ENCODE measurements at regions of chr2 and their contacts with region 1.

Region 1: DNA sequence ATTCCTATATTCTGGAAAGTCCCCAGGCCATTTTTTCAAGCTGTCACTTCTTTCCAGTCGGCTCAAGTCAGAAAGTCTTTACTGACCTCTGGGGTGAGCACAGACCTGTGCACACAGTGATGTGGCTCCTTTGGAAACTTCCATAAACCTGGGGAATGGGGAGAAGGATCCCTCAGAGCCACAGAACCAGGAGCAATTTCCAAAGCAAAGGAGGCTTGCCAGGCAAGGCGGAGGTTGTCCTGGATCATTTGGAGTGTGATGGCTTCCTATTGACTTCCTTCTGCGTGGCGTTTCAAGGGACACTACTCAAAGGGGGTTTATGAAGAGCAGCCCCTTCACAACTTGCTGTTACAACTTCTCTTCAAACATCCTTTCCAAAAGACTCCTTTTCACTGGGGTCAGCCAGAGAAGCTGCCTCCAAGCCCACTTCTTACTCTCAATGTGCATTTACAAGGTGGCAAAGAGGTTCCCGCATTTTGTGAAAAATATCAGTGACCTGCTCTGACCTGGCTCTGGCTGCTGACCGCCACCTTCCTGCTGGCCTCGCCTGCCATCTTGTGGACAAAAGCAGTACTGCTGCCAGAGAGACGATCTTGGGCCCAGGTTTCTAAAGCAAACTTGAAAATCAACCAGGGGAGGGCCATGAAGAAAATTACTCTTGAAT is 18.2 kb upstream of the TMEM247 start:
- DNase-seq: peak; percentile 81
- ATAC-seq: peak; percentile 81
- H3K4me3 Mint-ChIP-seq: no peak overlapping the region
- H3K27ac Mint-ChIP-seq: no peak overlapping the region
- H3K4me1 Mint-ChIP-seq: peaks cover 8% of the 10 kb centered on the region
- H3K27me3 Mint-ChIP-seq: no peaks in the 10 kb centered on the region
- CTCF ChIP-seq: peak; percentile 98

Region 2: DNA sequence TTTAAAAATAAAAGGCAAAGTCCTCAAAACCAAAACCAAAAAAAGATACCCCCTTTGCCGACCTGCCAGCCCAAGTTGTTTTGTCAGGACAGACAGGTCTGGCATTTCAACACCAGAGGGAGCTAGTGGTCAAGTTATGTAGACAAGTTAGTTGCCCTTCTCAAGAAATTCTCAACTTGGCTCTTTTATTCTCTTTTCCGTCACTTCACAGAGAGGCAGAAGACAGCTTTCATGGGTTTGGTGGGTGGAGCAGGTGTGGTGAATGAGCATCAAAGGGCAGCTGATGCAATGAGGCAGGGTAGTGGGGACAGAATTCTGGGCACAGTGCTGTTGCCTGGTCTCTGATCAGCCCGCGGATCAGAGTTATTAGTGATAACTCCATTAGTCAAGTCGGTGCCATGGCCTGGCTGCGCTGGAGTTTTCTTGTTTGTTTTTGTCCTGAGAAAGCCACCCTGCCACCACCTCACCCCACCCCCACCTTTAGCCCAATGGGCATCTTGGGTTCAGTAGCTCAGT is 467.6 kb before region 1 on chr2:
- CTCF ChIA-PET with region 1: interaction called, 13 read pairs
- POLR2A ChIA-PET with region 1: interaction called, 3 read pairs
- intact Hi-C with region 1: loop called (anchors 2 kb)
- DNase-seq: peak; percentile 78
- ATAC-seq: peak; percentile 94
- H3K4me3 Mint-ChIP-seq: no peak overlapping the region
- H3K27ac Mint-ChIP-seq: peak overlapping the region; percentile 30
- H3K4me1 Mint-ChIP-seq: peaks cover 4% of the 10 kb centered on the region
- H3K27me3 Mint-ChIP-seq: no peaks in the 10 kb centered on the region
- CTCF ChIP-seq: peak; percentile 76

Region 3: GRCh38 chr2:46010925-46011490 is 450.1 kb before region 1 on chr2:
- CTCF ChIA-PET with region 1: interaction called, 11 read pairs
- POLR2A ChIA-PET with region 1: no interaction called
- intact Hi-C with region 1: no loop called
- DNase-seq: no peak
- ATAC-seq: peak; percentile 79
- H3K4me3 Mint-ChIP-seq: no peak overlapping the region
- H3K27ac Mint-ChIP-seq: no peak overlapping the region
- H3K4me1 Mint-ChIP-seq: peaks cover 3% of the 10 kb centered on the region
- H3K27me3 Mint-ChIP-seq: no peaks in the 10 kb centered on the region
- CTCF ChIP-seq: peak; percentile 82

Region 4: DNA sequence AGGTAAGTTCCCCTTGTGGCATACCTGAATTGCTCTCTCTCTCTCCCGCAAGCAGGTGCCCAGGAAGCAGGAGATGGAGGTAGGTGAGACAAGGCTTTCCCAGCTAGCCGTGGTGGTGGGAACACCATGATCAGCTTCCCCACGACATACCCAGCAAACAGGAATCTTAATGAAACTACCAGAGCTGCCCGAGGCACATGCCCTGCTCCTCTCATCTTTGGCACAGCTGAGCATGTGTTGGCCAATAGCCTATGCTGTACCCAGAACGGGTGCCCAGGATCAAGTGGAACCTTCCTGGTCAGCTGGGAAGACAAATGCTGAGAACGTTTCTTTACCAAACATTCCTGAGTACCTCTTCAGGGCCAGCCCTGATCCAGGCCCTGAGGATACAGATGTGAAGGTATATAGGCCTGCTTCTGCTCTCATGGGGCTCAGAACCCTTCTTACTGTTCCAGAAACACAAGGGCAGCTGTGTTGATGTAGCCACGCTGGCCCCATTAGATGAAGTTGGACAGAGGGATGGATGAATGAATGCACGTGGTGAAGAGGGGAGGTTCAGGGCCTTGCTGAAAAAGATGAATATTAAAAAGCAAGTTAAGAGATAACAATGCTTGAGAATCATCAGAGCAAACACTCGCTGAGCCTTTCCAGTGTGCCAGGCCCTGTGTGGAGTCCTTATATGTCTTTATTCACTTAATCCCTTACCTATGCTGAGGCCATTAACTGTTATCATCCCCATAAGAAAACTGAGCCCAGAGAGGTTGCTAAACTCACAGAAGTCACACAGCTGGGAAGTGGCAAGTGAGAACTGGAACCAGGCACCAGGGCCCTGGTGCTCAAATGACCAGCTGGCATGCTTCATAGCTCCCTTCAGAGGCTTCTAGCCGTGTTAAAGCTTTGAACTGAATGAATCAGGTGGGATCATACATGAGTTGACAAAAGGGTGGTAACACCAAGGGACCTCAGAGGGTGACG is 50.6 kb before region 1 on chr2:
- CTCF ChIA-PET with region 1: interaction called, 10 read pairs
- POLR2A ChIA-PET with region 1: no interaction called
- intact Hi-C with region 1: no loop called
- DNase-seq: no peak
- ATAC-seq: no peak
- H3K4me3 Mint-ChIP-seq: no peak overlapping the region
- H3K27ac Mint-ChIP-seq: no peak overlapping the region
- H3K4me1 Mint-ChIP-seq: no peaks in the 10 kb centered on the region
- H3K27me3 Mint-ChIP-seq: no peaks in the 10 kb centered on the region
- CTCF ChIP-seq: no peak

Region 5: GRCh38 chr2:46651363-46652099 is 190.4 kb after region 1 on chr2:
- CTCF ChIA-PET with region 1: interaction called, 7 read pairs
- POLR2A ChIA-PET with region 1: no interaction called
- intact Hi-C with region 1: loop called (anchors 2 kb)
- DNase-seq: no peak
- ATAC-seq: no peak
- H3K4me3 Mint-ChIP-seq: no peak overlapping the region
- H3K27ac Mint-ChIP-seq: no peak overlapping the region
- H3K4me1 Mint-ChIP-seq: no peaks in the 10 kb centered on the region
- H3K27me3 Mint-ChIP-seq: no peaks in the 10 kb centered on the region
- CTCF ChIP-seq: no peak

Measured in activated CD8-positive, alpha-beta T cell treated with anti-CD3 and anti-CD28 coated beads for 36 hours (primary cell).